HepG2 (cell line): ENCODE measurements at regions of chr4 and their contacts with region 1.

Region 1: DNA sequence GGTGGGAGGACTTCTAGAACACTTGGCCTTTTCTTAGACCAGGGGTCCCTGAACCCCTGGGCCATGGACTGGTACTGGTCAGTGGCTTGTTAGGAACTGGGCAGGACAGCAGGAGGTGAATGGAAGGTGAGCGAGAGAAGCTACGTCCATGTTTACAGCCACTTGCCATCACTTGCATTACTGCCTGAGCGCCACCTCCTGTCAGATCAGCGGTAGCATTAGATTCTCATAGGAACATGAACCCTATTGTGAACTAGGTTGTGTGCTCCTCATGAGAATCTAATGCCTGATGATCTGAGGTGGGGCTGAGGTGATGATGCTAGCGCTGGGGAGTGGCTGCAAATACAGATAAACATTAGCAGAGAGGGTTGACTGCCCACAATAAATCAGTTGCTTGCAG is 100.9 kb upstream of the IGFBP7 start:
- DNase-seq: peak; percentile 4
- ATAC-seq: peak; percentile 69
- H3K4me3 ChIP-seq: no peak overlapping the region
- H3K27ac ChIP-seq: no peak overlapping the region
- H3K4me1 ChIP-seq: no peaks in the 10 kb centered on the region
- H3K27me3 ChIP-seq: 0 out of 5 replicates have a peak, but pooled peaks cover 0 to 2% of the 10 kb centered on the region in 2 experiments
- CTCF ChIP-seq: peak; percentile 65
- EP300 ChIP-seq: no peak
- POLR2A ChIP-seq: no peak
- RAD21 ChIP-seq: no peak

Region 2: DNA sequence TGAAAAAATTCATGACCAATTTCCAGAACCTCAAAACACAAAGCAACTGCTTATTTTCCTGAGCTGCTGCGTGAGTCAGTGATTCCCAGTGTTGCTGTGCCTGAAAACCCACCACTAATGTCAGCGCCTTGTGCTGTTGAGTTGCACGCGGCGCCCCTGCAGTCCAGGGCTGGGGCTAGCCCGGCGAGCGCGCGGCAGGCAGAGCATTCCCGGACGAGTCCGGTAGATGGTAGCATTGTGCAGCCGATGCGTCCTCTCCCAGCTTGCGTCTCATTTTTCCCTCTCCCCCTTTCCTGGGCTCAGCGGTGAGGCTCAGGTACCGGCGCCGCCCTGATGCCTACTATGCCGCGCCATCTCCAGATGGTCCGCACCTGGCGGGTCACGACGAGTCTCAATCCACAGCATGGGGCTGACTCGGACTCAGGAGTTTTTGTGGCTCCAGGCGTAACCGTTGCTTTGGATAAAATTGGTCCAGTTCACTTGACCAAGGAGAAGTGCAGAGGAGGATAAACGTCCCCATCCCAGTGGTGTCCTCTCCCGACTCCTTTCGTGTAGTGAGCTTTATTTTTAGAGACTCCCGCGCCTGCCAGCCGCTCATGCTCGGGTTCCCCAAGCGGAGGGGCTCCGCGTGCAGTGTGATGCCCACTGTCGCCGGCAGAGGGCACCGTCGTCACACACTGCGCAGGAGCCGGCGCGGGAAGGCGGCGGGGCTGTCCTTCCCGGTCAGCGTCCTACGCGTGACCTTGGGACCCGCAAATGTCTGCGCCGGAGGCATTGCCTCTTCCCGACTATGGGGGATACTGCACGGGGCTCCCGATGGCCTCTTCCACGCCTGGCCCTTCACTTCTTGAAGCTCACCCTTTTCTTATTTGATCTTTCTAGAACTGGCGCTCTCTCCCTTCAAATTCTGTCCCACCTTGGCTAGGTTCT is 47.3 kb before region 1 on chr4:
- CTCF ChIA-PET with region 1: interaction called, 15 read pairs
- POLR2A ChIA-PET with region 1: no interaction called
- in situ Hi-C with region 1: no loop called
- intact Hi-C with region 1: loop called (anchors 2 kb)
- DNase-seq: peak; percentile 68
- ATAC-seq: peak; percentile 99
- H3K4me3 ChIP-seq: peak overlapping the region; percentile 48 to 74 (median 59); a peak in 5 of 6 replicates
- H3K27ac ChIP-seq: no peak overlapping the region
- H3K4me1 ChIP-seq: peaks cover 13% of the 10 kb centered on the region; the same call in 1 of the 2 replicates
- H3K27me3 ChIP-seq: peaks cover 2 to 5% of the 10 kb centered on the region in 2 experiments; a peak in 4 of 5 replicates
- CTCF ChIP-seq: peak; percentile 88
- EP300 ChIP-seq: no peak
- POLR2A ChIP-seq: no peak
- RAD21 ChIP-seq: peak; percentile 79